ENCODE measurements at regions of chr3 and their contacts with region 1.

Region 1: GRCh38 chr3:74479915-74480314 is 134.5 kb downstream of the CNTN3 start:
- DNase-seq: no peak
- H3K4me3 ChIP-seq: no peak overlapping the region
- H3K27ac ChIP-seq: no peak overlapping the region
- H3K4me1 ChIP-seq: no peaks in the 10 kb centered on the region
- H3K27me3 ChIP-seq: no peaks in the 10 kb centered on the region
- CTCF ChIP-seq: no peak
- POLR2A ChIP-seq: no peak

Region 2: GRCh38 chr3:74518610-74519009 is 38.7 kb after region 1 on chr3:
- intact Hi-C with region 1: no loop called
- DNase-seq: no peak
- H3K4me3 ChIP-seq: no peak overlapping the region
- H3K27ac ChIP-seq: no peak overlapping the region
- H3K4me1 ChIP-seq: no peaks in the 10 kb centered on the region
- H3K27me3 ChIP-seq: no peaks in the 10 kb centered on the region
- CTCF ChIP-seq: no peak
- POLR2A ChIP-seq: no peak

Region 3: DNA sequence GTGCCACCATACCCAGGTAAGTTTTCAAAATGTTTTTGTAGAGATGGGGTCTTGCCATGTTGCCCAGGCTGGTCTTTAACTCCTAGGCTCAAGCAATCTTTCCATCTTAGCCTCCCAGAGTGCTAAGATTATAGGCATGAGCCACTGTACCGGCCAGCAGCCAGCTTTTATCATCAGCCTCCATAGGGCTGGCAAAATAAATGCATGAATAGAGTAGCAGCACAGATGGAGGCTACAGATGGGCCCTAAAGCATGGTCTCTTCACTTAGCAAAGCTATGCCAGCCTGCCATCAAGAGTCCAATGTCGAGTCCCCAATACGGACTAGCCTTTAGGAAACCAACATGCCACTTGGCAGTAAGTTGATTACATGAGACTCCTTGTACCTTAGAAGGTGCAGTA is 70.8 kb after region 1 on chr3:
- intact Hi-C with region 1: loop called (anchors 5 kb)
- DNase-seq: no peak
- H3K4me3 ChIP-seq: no peak overlapping the region
- H3K27ac ChIP-seq: no peak overlapping the region
- H3K4me1 ChIP-seq: no peaks in the 10 kb centered on the region
- H3K27me3 ChIP-seq: no peaks in the 10 kb centered on the region
- CTCF ChIP-seq: no peak
- POLR2A ChIP-seq: no peak

Region 4: DNA sequence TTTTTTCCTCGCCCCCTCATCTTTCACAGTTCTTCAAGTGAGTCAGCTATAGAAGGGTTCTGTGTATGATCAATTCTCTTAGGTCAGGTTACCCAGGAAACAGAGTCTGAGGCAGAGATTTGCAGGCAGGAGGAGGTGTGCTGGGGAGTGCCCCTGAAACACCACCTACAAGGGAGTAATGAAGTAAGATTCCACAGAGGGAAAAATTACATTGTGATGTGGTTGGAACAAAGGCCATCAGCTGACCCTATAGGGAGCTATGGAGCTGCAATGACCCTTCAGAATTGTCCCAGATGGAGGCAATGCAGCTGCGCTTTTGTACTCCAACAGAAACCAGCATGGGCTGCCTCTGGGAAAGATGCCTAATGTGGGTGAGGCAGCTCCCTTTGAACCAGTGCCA is 276.8 kb after region 1 on chr3:
- intact Hi-C with region 1: no loop called
- DNase-seq: no peak
- H3K4me3 ChIP-seq: no peak overlapping the region
- H3K27ac ChIP-seq: no peak overlapping the region
- H3K4me1 ChIP-seq: no peaks in the 10 kb centered on the region
- H3K27me3 ChIP-seq: no peaks in the 10 kb centered on the region
- CTCF ChIP-seq: no peak
- POLR2A ChIP-seq: no peak